Vagina (tissue), 2 donors: ENCODE measurements at regions of chr3 and their contacts with region 1.

Region 1: DNA sequence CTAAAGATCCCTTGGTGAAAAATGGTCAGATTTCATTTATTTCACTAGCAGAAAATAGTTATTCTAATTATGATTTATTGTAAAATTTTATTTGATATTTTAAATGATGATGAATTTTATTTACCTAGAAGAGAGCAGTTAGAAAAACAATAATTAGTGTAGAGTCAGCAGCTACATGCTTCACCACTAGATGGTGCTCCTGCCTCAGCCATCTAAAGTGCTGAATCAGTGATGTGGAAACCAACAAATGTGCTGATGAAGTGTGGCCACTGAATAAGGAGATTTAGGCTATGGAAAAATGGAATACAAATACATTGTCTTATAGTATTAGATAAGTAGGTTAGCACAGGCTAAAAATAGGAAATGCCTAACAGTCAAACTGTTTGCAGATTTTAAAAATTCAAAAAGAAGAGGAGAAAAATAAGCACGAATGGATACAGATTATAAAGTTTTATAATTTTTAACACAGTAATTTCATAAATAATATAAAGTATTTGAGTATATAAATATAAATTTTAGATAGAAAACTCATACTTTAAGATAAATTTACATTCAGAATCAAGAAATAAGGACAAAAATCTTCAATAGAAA is 109.8 kb downstream of the PPP2R3A start:
- DNase-seq: no peak
- H3K4me3 ChIP-seq: no peak overlapping the region
- H3K27ac ChIP-seq: no peak overlapping the region
- H3K4me1 ChIP-seq: peaks cover 6% of the 10 kb centered on the region
- H3K27me3 ChIP-seq: no peaks in the 10 kb centered on the region
- CTCF ChIP-seq: peak; percentile 81 to 98 (median 96)
- POLR2A ChIP-seq: no peak

Region 2: GRCh38 chr3:136250226-136250902 is 175.1 kb after region 1 on chr3 and contains the start of gene PCCB:
- intact Hi-C with region 1: loop called (anchors 10 kb)
- DNase-seq: peak; percentile 43 to 92
- H3K4me3 ChIP-seq: peak within 1 kb of the TSS; percentile 57 to 84
- H3K27ac ChIP-seq: peak within 1 kb of the TSS; percentile 87
- H3K4me1 ChIP-seq: peaks cover 22% of the 10 kb centered on the region
- H3K27me3 ChIP-seq: no peaks in the 10 kb centered on the region
- CTCF ChIP-seq: peak; percentile 61 to 90 (median 61)
- POLR2A ChIP-seq: no peak
- total RNA-seq, gene PCCB: 16.7 TPM

Region 3: DNA sequence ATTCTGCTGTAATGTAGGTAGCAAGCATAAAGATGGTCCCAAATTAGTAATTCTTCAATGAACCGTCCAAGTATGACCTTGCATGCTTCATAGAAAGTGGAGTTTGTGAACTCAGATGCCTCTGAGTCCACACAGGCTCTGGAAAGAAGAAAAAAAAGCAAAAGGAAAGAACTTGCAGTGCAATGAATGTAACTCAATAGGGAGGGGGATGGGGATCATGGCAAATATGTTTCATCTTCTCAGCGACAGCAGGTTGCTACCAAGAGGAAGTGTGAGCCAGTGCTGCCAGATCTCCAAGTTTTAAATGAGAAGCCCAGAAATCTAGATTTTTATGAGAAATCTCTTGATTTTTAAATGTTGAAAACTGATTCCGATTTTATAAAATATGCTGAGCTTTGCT is 932.8 kb after region 1 on chr3:
- intact Hi-C with region 1: loop called (anchors 5 kb)
- DNase-seq: no peak
- H3K4me3 ChIP-seq: no peak overlapping the region
- H3K27ac ChIP-seq: no peak overlapping the region
- H3K4me1 ChIP-seq: no peaks in the 10 kb centered on the region
- H3K27me3 ChIP-seq: no peaks in the 10 kb centered on the region
- CTCF ChIP-seq: no peak
- POLR2A ChIP-seq: no peak